ENCODE measurements at regions of chr9 and their contacts with region 1.

Region 1: DNA sequence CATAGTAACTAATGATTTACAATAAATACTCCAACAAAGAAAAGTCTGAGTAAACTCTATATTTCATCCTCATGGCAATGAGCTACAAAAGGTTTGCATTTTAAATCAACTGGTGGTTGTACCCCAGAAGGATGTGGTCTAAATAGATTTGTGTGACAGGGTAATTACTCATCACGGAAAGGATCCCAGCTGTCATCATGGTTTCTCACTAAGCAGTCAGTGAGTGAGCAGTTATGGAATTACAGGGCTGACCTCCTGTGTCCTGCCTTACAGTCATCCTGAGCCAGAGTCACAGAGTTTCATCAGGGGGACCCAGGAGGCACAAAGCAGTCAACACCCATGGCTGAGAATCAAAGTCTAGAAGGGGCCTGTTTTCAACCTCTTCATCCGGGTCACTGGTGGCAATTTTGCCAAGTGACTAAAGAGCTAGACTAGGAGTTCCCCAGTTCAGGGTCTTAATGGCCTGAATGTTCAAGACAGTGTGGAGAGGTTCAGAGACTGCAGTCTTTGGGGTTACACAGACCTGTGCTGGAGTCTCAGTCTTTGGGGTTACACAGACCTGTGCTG is 210.7 kb upstream of the SLC24A2 start:
- DNase-seq: peak; percentile 88
- H3K4me3 Mint-ChIP-seq: peak overlapping the region; percentile 74
- H3K27ac Mint-ChIP-seq: peak overlapping the region; percentile 99
- H3K4me1 Mint-ChIP-seq: peaks cover 53% of the 10 kb centered on the region
- H3K27me3 Mint-ChIP-seq: no peaks in the 10 kb centered on the region

Region 2: DNA sequence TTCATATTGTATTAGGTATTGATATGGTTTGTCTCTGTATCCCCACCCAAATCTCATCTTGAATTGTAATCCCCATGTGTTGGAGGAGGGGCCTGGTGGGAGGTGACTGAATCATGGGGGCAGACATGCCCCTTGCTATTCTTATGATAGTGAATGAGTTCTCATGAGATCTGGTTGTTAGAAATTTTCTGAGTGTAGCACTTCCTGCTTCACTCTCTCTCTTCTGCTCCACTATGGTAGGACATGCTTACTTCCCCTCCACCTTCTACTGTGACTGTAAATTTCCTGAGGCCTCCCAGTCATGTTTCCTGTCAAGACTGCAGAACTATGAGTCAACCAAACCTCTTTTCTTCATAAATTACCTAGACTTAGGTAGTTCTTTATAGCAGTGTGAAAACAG is 23.3 kb before region 1 on chr9:
- intact Hi-C with region 1: loop called (anchors 1 kb)
- DNase-seq: peak; percentile 81
- H3K4me3 Mint-ChIP-seq: peak overlapping the region; percentile 1
- H3K27ac Mint-ChIP-seq: peak overlapping the region; percentile 94
- H3K4me1 Mint-ChIP-seq: peaks cover 33% of the 10 kb centered on the region
- H3K27me3 Mint-ChIP-seq: no peaks in the 10 kb centered on the region

Region 3: GRCh38 chr9:20065796-20066700 is 66.5 kb after region 1 on chr9:
- intact Hi-C with region 1: no loop called
- DNase-seq: no peak
- H3K4me3 Mint-ChIP-seq: no peak overlapping the region
- H3K27ac Mint-ChIP-seq: no peak overlapping the region
- H3K4me1 Mint-ChIP-seq: peaks cover 10% of the 10 kb centered on the region
- H3K27me3 Mint-ChIP-seq: peaks cover 1% of the 10 kb centered on the region

Region 4: GRCh38 chr9:20242510-20243189 is 243.1 kb after region 1 on chr9:
- intact Hi-C with region 1: loop called (anchors 1 kb)
- DNase-seq: peak; percentile 88
- H3K4me3 Mint-ChIP-seq: peak overlapping the region; percentile 77
- H3K27ac Mint-ChIP-seq: peak overlapping the region; percentile 61
- H3K4me1 Mint-ChIP-seq: peaks cover 58% of the 10 kb centered on the region
- H3K27me3 Mint-ChIP-seq: no peaks in the 10 kb centered on the region

Region 5: DNA sequence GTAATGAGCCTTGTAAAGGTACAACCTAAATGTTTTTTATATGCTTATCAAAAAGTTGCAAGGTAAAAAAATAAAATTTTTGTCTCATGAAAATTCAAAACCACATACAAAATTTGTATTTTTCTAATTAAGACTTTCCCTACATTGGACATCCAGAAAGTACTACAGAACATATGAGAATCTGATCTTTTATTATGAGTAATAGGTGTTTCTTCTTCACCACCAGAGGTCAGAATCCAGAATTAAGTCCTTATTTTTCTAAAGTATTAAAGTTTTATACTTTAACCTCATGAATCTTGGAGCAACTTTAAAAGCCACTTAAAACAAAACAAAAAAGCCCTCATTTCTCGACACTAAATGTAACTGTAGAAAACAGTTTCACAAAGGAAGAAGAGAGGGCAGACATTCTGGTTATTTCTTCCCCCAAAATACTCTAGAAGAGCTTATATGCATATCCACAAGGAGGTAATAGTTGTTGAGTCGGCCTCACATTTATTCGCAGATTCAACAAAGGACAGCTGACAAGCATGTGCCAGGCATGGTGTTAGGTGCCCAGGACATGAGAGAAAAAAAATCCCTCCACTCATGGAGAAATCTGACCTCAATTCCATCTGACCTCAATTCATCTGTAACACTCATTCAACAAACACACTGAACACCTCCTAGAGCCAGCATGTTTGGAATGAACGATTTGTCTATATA is 553.5 kb after region 1 on chr9:
- intact Hi-C with region 1: loop called (anchors 5 kb)
- DNase-seq: peak; percentile 69
- H3K4me3 Mint-ChIP-seq: peak overlapping the region; percentile 57
- H3K27ac Mint-ChIP-seq: peak overlapping the region; percentile 82
- H3K4me1 Mint-ChIP-seq: peaks cover 67% of the 10 kb centered on the region
- H3K27me3 Mint-ChIP-seq: no peaks in the 10 kb centered on the region

Region 6: DNA sequence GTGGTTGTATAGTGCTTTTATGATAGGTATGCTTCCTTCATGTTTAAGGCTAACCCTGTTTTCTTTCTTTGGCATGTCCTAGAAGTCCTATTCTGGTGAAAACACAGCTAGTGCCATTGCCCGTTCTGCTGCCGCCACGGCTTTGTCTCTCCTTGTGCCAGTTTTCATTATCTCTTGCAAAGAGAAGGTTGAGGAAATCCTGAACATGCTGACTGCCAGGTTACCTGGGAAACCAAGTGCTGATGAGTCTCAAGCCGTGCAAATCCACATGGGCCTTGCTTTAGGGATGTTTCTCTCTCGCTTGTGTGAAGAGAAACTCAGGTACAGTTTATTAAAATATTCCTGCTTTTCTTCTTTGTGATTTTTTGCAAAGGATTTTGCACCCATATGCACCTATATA is 929.7 kb after region 1 on chr9:
- intact Hi-C with region 1: loop called (anchors 1 kb)
- DNase-seq: no peak
- H3K4me3 Mint-ChIP-seq: no peak overlapping the region
- H3K27ac Mint-ChIP-seq: no peak overlapping the region
- H3K4me1 Mint-ChIP-seq: peaks cover 25% of the 10 kb centered on the region
- H3K27me3 Mint-ChIP-seq: no peaks in the 10 kb centered on the region